Right ventricle myocardium superior (tissue), 1 donor: ENCODE measurements at regions of chr7 and their contacts with region 1.

Region 1: GRCh38 chr7:142094861-142095260 is 16.7 kb upstream of the MGAM2 start:
- DNase-seq: no peak
- ATAC-seq: no peak

Region 2: GRCh38 chr7:141992156-141992555 is 102.7 kb before region 1 on chr7:
- intact Hi-C with region 1: no loop called
- DNase-seq: no peak
- ATAC-seq: no peak

Region 3: DNA sequence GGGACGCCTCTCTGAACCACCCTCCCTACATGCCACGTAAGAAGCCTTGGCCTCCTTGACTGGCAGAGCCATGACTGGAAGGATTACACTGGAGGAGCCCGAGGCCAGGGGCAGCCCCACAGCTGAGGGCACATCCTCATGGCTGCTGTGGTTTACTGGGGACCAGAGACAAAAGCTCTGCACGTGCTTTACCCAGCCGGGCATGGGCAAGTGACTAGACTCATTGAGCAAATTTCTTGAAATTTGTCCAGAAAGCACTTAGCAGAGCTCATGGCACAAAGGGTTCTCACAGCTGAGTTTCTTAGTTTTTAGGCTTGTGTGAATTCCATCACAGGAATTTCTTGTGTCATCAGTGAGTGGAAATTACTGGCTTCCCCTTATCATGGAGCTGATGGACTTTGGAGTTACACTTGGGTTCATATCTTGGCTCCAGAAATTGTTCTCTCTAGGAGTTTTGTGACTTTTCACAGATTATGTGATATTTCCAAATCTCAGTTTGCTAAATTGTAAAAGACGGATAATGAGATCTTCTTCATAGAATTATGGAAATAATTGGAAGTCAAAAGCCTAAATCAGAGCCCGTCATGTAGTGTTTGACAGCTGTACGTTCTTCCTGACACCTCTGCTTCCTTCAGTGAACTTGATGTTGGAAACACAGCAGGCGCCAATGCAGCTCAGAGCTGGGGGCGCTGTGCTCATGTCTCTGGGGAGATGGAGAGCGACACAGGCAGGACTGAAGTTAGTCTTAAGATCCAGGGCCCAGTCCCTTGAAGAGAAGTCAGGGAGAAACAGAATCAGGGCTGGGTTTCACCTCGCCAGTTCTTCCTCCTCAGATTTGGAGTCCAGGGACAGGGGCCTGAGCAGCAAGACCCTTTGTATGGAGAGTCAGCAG is 31.1 kb before region 1 on chr7:
- intact Hi-C with region 1: loop called (anchors 2 kb)
- DNase-seq: no peak
- ATAC-seq: no peak